Cardiac septum (tissue), 1 donor: ENCODE measurements at regions of chr10 and their contacts with region 1.

Region 1: DNA sequence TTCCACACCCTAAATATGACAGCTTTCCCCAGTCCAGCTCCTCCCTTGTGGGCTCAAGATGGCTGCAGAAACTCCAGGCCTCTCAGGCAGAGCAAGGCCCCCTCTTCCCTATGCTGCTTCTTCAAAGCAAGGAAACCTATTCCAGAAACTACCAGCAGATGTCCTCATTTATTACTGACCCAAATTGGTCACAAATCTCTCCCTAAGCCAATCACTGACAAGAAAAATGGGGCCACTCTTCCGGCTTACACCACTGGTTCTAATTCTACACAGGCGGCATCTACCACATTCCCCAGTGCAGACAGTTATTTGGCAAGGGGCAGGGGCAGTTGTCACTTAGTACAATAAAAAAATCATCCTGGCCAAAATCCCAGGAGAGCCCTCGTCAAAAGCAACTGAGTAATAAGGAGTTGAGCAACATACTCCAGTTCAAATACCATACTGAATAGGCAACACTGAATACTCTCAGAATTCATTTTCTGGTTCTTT is 150.4 kb downstream of the SFMBT2 start:
- DNase-seq: no peak

Region 2: DNA sequence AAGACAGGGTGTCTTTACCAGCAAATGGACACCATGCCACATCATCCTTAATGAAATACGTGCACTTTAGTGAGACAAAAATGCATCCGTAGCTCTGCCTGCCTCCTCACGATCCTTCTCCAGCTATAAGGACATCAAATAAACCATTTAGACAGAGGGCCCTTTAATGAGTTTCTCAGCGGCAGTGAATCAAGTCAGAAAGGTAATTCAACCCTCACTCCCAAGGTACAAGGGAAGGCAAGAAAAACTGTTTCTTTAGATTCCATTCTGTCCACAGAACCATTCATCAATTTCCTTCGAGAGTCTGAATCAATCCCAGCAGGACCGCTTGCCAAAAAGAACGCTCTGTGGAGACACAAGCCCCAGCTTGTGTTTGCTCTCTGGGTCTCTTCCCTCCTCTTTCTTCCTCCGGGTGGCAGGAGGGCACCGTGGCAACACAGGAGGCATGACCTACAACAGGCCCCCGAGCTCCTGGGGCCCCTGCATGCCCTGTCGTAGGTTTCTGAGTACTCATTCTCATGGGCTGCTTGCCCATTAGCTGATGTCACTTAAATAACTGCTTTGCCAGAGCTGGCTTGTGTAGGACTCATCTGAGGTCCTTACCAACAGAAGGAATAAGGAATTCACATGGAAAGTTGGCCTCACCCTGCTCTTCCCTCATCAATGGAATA is 382.6 kb before region 1 on chr10:
- intact Hi-C with region 1: no loop called
- DNase-seq: no peak

Region 3: DNA sequence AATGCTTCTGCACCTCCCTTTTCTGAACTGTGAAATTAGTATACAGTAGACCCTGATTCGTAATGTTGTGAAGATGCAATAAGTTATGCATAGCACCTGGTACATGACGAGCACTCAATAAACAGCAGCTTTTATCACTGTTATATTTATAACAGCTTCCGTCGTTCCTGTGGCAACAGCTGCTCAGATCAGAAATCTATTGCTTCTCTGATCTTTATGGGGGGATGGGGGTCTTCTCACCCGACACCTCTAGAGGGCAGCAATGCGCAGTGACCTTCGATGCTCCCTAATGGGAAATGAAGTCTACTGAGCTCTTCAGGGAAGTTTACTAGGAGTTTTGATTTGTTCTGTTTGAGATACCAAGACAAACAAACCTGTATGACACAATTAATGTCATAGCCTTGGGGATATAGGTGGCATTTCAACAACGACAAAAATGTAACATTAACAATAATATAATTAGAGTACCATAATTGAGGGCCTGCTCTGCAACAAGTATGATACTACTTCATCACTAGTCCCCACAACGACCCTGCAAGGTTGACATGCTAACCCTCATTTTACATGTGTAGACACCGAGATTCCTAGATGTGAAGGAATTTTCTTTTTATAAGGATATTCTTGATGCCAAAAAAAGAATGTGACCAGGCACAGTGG is 139.2 kb before region 1 on chr10:
- intact Hi-C with region 1: loop called (anchors 10 kb)
- DNase-seq: peak; percentile 79

Region 4: DNA sequence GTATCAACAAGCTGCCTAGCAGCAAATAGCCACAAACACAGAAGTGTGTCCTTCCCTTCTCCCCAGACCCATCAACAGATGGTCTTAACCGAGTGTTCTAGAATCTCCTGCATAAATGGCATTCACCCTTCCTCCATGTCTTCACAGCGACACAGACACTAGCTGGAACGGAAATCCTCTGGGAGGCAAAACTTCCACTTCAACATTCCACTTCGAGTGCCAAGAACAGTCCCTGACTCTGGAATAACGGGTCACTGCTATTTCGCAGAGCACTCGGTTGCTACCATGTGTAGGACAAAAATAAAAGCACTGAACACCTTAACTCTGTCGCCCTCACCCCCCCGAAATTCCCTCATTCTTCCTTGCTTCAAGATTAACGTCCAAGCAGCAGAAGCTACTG is 85.3 kb after region 1 on chr10:
- intact Hi-C with region 1: loop called (anchors 5 kb)
- DNase-seq: no peak

Region 5: GRCh38 chr10:8369666-8370065 is 1109.2 kb after region 1 on chr10:
- intact Hi-C with region 1: no loop called
- DNase-seq: no peak